ENCODE measurements at regions of chr16 and their contacts with region 1.

Region 1: GRCh38 chr16:62041401-62041800 is 5.2 kb upstream of the CDH8 start:
- DNase-seq: peak; percentile 45
- H3K4me3 Mint-ChIP-seq: no peak overlapping the region
- H3K27ac Mint-ChIP-seq: no peak overlapping the region
- H3K4me1 Mint-ChIP-seq: no peaks in the 10 kb centered on the region
- H3K27me3 Mint-ChIP-seq: peaks cover 81% of the 10 kb centered on the region
- CTCF ChIP-seq: peak; percentile 64

Region 2: DNA sequence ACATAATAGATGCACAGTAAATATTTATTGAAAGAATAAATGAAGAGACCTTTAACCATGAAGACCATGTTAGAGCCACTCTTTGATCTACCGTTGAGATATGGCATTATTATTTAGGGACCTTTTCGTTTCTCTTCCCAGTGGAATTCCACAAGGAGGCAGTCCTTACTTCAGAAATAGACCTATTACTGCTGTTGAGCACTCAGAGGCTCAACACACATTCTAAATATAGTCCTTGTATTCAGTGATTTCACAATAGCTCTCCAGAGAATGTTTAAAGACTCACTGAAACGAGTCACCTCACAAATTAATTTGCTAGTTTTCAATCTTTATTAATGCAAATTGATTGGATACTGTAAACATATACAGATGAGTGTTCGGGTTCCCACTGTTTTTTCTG is 609.0 kb before region 1 on chr16:
- CTCF ChIA-PET with region 1: no interaction called
- POLR2A ChIA-PET with region 1: no interaction called
- intact Hi-C with region 1: loop called (anchors 1 kb)
- DNase-seq: peak; percentile 6
- H3K4me3 Mint-ChIP-seq: no peak overlapping the region
- H3K27ac Mint-ChIP-seq: no peak overlapping the region
- H3K4me1 Mint-ChIP-seq: no peaks in the 10 kb centered on the region
- H3K27me3 Mint-ChIP-seq: peaks cover 78% of the 10 kb centered on the region
- CTCF ChIP-seq: no peak

Region 3: DNA sequence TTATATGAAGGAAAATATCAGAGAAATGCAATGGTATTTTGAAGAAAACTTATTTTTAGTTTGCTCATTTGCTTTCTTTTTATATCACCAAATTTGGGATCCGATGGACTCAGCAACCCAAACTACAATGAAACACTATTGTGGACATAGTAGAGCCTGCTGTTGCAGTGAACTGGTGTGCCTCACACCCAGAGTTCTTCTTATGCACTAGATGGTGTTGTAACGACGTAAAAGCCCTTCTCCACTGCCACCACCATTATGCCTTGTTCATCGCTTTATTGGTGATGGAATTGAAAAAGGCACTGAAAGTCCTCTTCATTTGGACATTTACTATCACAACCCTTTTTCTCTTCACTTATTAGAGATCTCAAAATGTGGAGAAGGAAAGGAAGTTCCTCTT is 386.4 kb before region 1 on chr16:
- CTCF ChIA-PET with region 1: interaction called, 3 read pairs
- POLR2A ChIA-PET with region 1: no interaction called
- intact Hi-C with region 1: loop called (anchors 5 kb)
- DNase-seq: no peak
- H3K4me3 Mint-ChIP-seq: no peak overlapping the region
- H3K27ac Mint-ChIP-seq: no peak overlapping the region
- H3K4me1 Mint-ChIP-seq: no peaks in the 10 kb centered on the region
- H3K27me3 Mint-ChIP-seq: peaks cover 54% of the 10 kb centered on the region
- CTCF ChIP-seq: no peak

Region 4: GRCh38 chr16:62051942-62052341 is 10.5 kb after region 1 on chr16:
- CTCF ChIA-PET with region 1: no interaction called
- POLR2A ChIA-PET with region 1: no interaction called
- intact Hi-C with region 1: no loop called
- DNase-seq: no peak
- H3K4me3 Mint-ChIP-seq: no peak overlapping the region
- H3K27ac Mint-ChIP-seq: no peak overlapping the region
- H3K4me1 Mint-ChIP-seq: no peaks in the 10 kb centered on the region
- H3K27me3 Mint-ChIP-seq: peaks cover 95% of the 10 kb centered on the region
- CTCF ChIP-seq: no peak